Right ventricle myocardium superior (tissue), 1 donor: ENCODE measurements at regions of chr22 and their contacts with region 1.

Region 1: DNA sequence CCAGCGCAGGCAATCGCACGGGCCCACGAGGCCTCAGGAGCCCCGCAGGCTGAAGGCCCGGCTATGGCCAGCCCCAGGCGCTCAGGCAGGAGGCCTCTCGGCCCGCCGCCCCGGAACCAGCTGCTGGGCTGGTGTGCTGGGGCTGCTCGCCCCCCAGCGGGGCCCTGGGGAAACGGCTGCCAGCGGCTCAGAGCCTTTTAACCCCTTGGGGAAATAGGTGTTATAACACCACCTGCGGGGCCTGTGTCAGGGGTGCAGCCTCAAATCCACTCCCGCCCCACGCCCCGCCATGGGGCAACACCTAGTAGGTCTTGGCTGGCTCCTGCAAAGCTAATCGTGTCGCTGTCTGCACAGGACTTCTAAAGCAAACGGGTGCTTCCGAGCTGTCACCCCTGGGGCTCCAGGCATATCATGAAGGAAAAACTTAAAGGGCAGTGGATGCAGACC is 237.4 kb downstream of the TTC28 start:
- DNase-seq: peak; percentile 88
- ATAC-seq: peak; percentile 94

Region 2: DNA sequence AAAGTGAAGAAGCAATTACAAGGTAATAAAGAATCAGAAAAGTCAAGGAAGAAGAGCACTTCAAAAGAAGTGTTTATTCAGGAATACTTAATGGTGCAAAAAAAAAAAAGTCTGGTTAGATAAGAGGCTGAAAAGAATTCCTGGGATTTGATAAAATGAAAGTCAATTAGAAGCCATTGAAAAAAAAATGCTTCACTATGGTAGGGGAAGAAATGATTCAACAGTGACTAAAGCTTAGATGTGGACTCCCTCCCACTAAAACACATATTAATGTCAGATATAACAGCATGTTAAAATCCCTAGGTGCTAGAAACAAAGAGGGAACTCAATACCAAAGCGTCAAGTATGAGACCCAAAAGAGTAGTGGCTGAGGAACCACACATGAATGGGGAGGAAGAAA is 187.9 kb before region 1 on chr22:
- intact Hi-C with region 1: no loop called
- DNase-seq: no peak
- ATAC-seq: no peak

Region 3: GRCh38 chr22:28268171-28268570 is 174.1 kb before region 1 on chr22:
- intact Hi-C with region 1: loop called (anchors 10 kb)
- DNase-seq: no peak
- ATAC-seq: no peak